ENCODE measurements at regions of chr9 and their contacts with region 1.

Region 1: GRCh38 chr9:113807173-113808061 is 68.7 kb upstream of the ZNF618 start:
- DNase-seq: peak; percentile 13
- H3K4me3 ChIP-seq: peak overlapping the region; percentile 31; the same call in 1 of the 2 replicates
- H3K27ac ChIP-seq: no peak overlapping the region
- H3K27me3 ChIP-seq: peaks cover 15% of the 10 kb centered on the region
- CTCF ChIP-seq: peak; percentile 93

Region 2: GRCh38 chr9:113822315-113822714 is 14.9 kb after region 1 on chr9:
- CTCF ChIA-PET with region 1: interaction called, 10 read pairs
- POLR2A ChIA-PET with region 1: no interaction called
- DNase-seq: no peak
- H3K4me3 ChIP-seq: no peak overlapping the region
- H3K27ac ChIP-seq: no peak overlapping the region
- H3K27me3 ChIP-seq: peaks cover 10% of the 10 kb centered on the region
- CTCF ChIP-seq: no peak

Region 3: DNA sequence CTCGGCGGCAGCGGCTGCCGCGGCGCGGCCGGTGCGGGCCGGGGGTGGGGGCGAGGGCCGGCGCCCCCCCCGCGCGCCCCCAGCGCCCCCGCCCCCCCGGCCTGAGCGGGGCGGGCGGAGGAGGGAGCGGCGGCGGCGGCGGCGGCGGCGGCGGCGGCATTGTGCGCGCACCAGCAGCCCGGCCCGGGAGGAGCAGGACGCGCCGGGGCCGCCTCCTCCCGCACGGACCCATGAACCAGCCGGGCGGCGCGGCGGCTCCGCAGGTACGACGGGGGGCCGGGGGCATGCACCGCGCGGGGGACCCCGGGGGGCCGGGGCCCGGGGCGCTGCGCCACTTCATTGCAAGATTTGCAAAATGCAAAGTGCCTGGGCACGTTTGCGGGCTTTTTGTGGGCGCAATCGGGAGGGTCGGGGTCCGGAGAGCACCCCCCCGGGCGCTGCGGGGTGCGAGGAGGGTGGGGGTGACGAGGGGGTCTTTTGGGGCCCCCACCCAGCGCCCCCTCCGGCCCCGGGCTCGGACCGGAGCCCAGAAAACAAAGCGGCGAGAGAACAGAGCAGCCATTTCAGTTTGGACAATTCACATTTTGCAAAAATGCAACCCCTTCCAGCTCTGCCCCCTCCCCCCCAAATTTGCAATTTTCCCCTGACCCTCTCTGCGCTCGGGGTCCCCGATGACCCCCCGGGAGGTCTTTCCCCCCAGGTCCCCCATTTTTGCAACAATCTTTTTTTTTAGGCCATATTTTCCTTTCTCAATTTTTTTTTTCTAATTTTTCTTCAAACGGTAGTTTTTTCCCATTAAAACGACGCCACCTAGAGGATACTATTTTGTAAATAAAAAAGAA is 69.0 kb after region 1 on chr9 and contains the start of gene ZNF618:
- CTCF ChIA-PET with region 1: interaction called, 11 read pairs
- POLR2A ChIA-PET with region 1: interaction called, 5 read pairs
- DNase-seq: no peak
- H3K4me3 ChIP-seq: peak within 1 kb of the TSS; percentile 68
- H3K27ac ChIP-seq: peak within 1 kb of the TSS; percentile 65
- H3K27me3 ChIP-seq: no peaks in the 10 kb centered on the region
- CTCF ChIP-seq: peak; percentile 52
- polyA plus RNA-seq, gene ZNF618: 8.7 and 11.2 TPM in 2 replicates

Measured in AG04450 (cell line).